Esophagus squamous epithelium (tissue), 5 donors: ENCODE measurements at regions of chr10 and their contacts with region 1.

Region 1: DNA sequence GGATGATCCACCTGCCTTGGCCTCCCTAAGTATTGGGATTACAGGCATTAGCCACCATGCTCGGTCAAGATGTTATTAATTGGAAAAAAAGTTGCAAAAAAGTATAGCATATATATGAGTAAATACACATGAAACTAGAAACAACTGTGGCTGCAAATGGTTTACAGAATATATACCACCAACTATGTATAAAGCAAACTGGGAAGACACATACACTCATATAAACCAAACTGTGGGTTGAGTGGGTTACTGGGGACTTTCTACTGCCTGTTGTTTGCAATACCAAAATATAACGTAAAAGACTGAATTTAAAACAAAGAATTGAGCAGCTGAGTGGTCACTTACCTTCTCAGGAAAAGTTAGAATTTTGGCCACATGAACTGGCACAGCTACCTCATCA is 8.1 kb downstream of the POLR3A start:
- DNase-seq: no peak
- H3K4me3 ChIP-seq: no peak overlapping the region
- H3K27ac ChIP-seq: no peak overlapping the region
- H3K4me1 ChIP-seq: no peaks in the 10 kb centered on the region
- H3K27me3 ChIP-seq: no peaks in the 10 kb centered on the region
- CTCF ChIP-seq: no peak
- POLR2A ChIP-seq: no peak

Region 2: GRCh38 chr10:77827383-77827782 is 193.8 kb before region 1 on chr10:
- intact Hi-C with region 1: loop called (anchors 5 kb)
- DNase-seq: no peak
- H3K4me3 ChIP-seq: no peak overlapping the region
- H3K27ac ChIP-seq: no peak overlapping the region
- H3K4me1 ChIP-seq: peaks cover 0 to 8% (median 0%) of the 10 kb centered on the region in 3 donors
- H3K27me3 ChIP-seq: no peaks in the 10 kb centered on the region
- CTCF ChIP-seq: no peak
- POLR2A ChIP-seq: no peak